ENCODE measurements at regions of chr5 and their contacts with region 1.

Region 1: GRCh38 chr5:129094087-129094923 is at the start of gene ISOC1:
- DNase-seq: peak; percentile 94
- H3K4me3 Mint-ChIP-seq: peak within 1 kb of the TSS; percentile 84
- H3K27ac Mint-ChIP-seq: peak within 1 kb of the TSS; percentile 46
- H3K4me1 Mint-ChIP-seq: peaks cover 20% of the 10 kb centered on the region
- H3K27me3 Mint-ChIP-seq: peaks cover 21% of the 10 kb centered on the region
- CTCF ChIP-seq: no peak
- total RNA-seq, gene ISOC1: 11.2 and 12.8 TPM in 2 replicates

Region 2: GRCh38 chr5:129113871-129114270 is 19.6 kb after region 1 on chr5:
- CTCF ChIA-PET with region 1: interaction called, 12 read pairs
- POLR2A ChIA-PET with region 1: interaction called, 7 read pairs
- intact Hi-C with region 1: no loop called
- DNase-seq: no peak
- H3K4me3 Mint-ChIP-seq: no peak overlapping the region
- H3K27ac Mint-ChIP-seq: no peak overlapping the region
- H3K4me1 Mint-ChIP-seq: no peaks in the 10 kb centered on the region
- H3K27me3 Mint-ChIP-seq: no peaks in the 10 kb centered on the region
- CTCF ChIP-seq: no peak

Region 3: GRCh38 chr5:129244478-129244877 is 150.2 kb after region 1 on chr5:
- CTCF ChIA-PET with region 1: no interaction called
- POLR2A ChIA-PET with region 1: no interaction called
- intact Hi-C with region 1: no loop called
- DNase-seq: no peak
- H3K4me3 Mint-ChIP-seq: no peak overlapping the region
- H3K27ac Mint-ChIP-seq: no peak overlapping the region
- H3K4me1 Mint-ChIP-seq: no peaks in the 10 kb centered on the region
- H3K27me3 Mint-ChIP-seq: peaks cover 54% of the 10 kb centered on the region
- CTCF ChIP-seq: no peak

Measured in MCF 10A (cell line).